ENCODE measurements at regions of chr17 and their contacts with region 1.

Region 1: DNA sequence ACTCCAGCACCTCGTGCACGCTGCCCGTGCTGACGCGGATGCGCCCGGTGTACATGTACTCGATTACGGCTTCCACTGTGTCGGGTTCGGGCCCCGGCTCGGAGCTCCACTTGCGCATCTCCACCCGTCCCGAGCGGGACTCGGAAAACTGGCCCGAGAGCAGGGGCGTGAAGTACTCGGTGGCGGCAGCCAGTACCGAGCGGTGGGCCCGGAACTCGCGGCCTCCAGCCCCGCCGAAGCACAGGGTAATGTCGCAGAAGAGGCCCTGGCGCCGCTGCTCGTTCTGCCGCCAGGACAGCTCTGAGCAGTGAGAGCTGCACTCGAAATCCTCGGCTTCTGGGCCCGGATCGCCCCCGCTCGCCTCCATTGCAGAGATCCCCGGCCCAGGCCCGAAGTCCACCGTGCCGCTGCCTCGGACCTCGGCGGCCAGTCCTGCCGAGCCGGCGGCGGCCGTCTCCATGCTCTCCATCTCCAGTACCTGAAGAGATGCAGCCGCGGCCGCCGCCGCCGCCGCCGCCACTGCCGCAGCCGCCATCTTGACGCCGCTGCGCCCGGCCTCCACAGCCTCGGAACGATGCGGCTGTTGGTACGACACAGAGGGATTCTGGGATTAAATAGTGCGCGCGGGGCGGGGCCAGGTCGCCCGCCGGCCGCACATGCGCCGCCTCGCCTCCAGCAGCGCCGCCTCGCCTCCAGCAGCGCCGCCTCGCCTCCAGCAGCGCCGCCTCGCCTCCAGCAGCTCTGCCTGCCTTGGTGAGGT is at the start of gene KLHL11:
- DNase-seq: peak; percentile 78 to 88 (median 86)
- ATAC-seq: peak; percentile 97
- H3K4me3 ChIP-seq: peak within 1 kb of the TSS; percentile 89
- H3K4me3 Mint-ChIP-seq: no peak within 1 kb of the TSS
- H3K27ac ChIP-seq: peak within 1 kb of the TSS; percentile 90
- H3K27ac Mint-ChIP-seq: peak within 1 kb of the TSS in 4 of 9 donors; percentile 73 to 92 (median 90)
- H3K4me1 ChIP-seq: peaks cover 25 to 31% of the 10 kb centered on the region in 2 donors
- H3K4me1 Mint-ChIP-seq: peaks cover 15 to 43% (median 32%) of the 10 kb centered on the region in 7 donors
- H3K27me3 ChIP-seq: no peaks in the 10 kb centered on the region
- H3K27me3 Mint-ChIP-seq: no peaks in the 10 kb centered on the region
- total RNA-seq, gene KLHL11: 15.2 to 25.9 (median 18.9) TPM

Region 2: DNA sequence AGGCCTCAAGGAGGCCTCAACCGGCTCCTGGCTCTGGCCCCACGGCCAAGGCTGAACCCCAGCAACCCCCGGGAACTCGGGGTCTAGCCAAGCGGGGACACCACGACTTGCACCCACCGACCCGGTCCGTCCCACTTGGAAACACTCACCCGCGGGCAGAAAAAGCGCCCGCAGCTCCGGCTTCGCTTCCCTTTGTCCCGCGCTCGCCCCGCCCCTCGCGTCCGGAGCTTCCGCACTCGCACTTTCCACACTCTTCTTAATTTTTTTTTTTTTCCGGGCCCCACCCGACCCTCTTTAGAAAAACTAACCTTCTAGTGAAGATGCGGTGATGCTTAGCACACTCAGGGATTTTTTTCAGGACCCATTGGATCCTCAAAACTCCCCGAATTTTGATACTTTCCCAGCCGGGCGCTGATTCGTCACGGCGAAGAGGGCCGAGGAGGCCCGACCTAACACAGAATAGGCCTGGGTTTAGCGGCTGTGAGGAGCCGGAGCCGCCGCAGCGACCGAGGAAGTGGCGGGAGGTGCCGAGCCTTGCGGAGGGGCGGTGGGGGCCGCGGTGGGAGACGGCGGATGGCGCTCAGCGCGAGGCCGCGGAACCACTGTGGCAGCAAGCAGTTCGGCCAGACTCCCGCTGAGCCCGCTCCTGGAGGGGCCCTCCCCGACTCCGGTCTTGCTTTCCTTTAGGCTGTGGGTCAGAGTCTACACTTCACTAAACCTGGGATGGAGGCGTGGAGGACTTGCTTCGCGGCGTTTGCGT is 1217.2 kb before region 1 on chr17 and contains the start of gene SMARCE1:
- CTCF ChIA-PET with region 1: no interaction called
- POLR2A ChIA-PET with region 1: no interaction called
- intact Hi-C with region 1: loop called in 1 of 2 experiments (anchors 5 kb)
- DNase-seq: peak; percentile 63 to 81 (median 76)
- ATAC-seq: peak; percentile 87
- H3K4me3 ChIP-seq: peak within 1 kb of the TSS; percentile 89
- H3K4me3 Mint-ChIP-seq: peak within 1 kb of the TSS; percentile 86 to 99 (median 90)
- H3K27ac ChIP-seq: peak within 1 kb of the TSS; percentile 95
- H3K27ac Mint-ChIP-seq: peak within 1 kb of the TSS; percentile 86 to 100 (median 98)
- H3K4me1 ChIP-seq: peaks cover 11 to 33% of the 10 kb centered on the region in 2 donors
- H3K4me1 Mint-ChIP-seq: peaks cover 27 to 64% (median 46%) of the 10 kb centered on the region in 7 donors
- H3K27me3 ChIP-seq: no peaks in the 10 kb centered on the region
- H3K27me3 Mint-ChIP-seq: no peaks in the 10 kb centered on the region
- total RNA-seq, gene SMARCE1: 65.4 to 101 (median 79.2) TPM

Region 3: GRCh38 chr17:41474863-41475262 is 390.2 kb before region 1 on chr17:
- CTCF ChIA-PET with region 1: no interaction called
- POLR2A ChIA-PET with region 1: no interaction called
- intact Hi-C with region 1: no loop called
- DNase-seq: no peak
- ATAC-seq: no peak
- H3K4me3 ChIP-seq: no peak overlapping the region
- H3K4me3 Mint-ChIP-seq: no peak overlapping the region
- H3K27ac ChIP-seq: no peak overlapping the region
- H3K27ac Mint-ChIP-seq: no peak overlapping the region
- H3K4me1 ChIP-seq: no peaks in the 10 kb centered on the region
- H3K4me1 Mint-ChIP-seq: no peaks in the 10 kb centered on the region
- H3K27me3 ChIP-seq: no peaks in the 10 kb centered on the region
- H3K27me3 Mint-ChIP-seq: peaks cover 0 to 6% (median 0%) of the 10 kb centered on the region in 5 donors

Region 4: DNA sequence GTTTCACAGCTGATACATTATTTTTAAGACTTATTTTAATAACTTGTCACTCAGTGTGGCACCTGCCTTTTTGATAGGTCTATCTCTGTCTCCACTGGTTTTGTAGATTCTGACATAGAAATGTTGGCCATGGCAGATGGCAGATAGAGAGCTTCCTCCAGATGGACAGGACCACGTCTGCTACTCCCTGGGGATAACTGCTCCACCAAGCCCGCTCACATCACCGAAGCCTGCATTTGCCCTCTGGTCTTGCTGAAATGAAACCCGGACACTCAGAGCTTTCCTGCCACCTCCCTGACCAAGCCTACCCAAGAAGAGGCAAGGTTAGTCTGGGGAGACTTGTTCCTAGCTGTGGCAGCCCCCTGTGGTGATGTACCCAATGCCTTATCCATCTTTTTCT is 114.2 kb before region 1 on chr17:
- CTCF ChIA-PET with region 1: no interaction called
- POLR2A ChIA-PET with region 1: no interaction called
- intact Hi-C with region 1: no loop called
- DNase-seq: no peak
- ATAC-seq: no peak
- H3K4me3 ChIP-seq: no peak overlapping the region
- H3K4me3 Mint-ChIP-seq: no peak overlapping the region
- H3K27ac ChIP-seq: no peak overlapping the region
- H3K27ac Mint-ChIP-seq: peak overlapping the region in 1 of 9 donors; percentile 65
- H3K4me1 ChIP-seq: no peaks in the 10 kb centered on the region
- H3K4me1 Mint-ChIP-seq: no peaks in the 10 kb centered on the region
- H3K27me3 ChIP-seq: no peaks in the 10 kb centered on the region
- H3K27me3 Mint-ChIP-seq: peaks cover 0 to 8% (median 0%) of the 10 kb centered on the region in 5 donors

Region 5: DNA sequence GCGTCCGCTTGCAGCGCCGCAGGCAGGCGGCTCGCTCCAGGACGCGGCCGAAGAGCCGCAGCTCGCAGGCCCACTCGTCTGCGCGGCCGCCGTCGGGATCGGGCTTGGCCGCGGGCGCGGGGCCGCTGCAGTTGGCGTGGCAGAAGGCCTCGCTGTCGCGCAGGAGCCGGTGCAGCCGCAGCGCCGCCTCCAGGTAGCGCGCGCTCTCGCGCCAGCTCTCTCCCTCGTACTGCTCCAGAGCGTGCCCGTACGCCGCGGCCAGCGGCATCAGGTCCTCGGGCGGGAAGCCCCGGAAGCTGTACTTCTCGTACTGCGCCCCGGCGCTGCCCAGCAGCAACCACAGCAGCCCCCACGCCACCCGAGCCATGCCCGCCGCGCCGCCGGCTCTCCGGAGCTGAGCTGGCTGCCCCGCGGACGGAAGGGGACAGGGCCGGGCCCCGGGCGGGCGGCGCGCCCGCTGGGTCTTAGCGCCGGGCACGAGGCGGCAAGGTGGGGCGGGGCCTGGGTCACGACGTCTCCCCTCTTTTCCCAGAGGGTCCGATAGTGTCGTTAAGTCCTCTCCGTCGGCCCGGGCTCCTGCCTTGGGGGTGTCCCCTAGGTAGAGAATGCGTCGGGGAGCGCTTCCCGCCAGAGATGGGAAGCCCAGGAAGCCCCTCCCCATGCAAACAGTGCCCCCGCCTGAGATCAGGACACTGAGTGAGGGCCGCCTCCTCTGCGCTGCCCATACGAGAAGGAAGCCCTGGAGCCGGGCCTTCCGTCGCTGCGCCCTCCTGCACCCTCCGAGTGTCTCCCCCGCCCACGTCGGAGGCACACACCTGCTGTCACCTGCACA is 53.3 kb before region 1 on chr17 and contains the start of gene P3H4:
- CTCF ChIA-PET with region 1: interaction called, 3 read pairs
- POLR2A ChIA-PET with region 1: interaction called, 8 read pairs
- intact Hi-C with region 1: loop called in 1 of 2 experiments (anchors 1 kb)
- DNase-seq: peak; percentile 68 to 83 (median 79)
- ATAC-seq: peak; percentile 94
- H3K4me3 ChIP-seq: peak within 1 kb of the TSS; percentile 81
- H3K4me3 Mint-ChIP-seq: peak within 1 kb of the TSS; percentile 89 to 99 (median 94)
- H3K27ac ChIP-seq: peak within 1 kb of the TSS; percentile 48
- H3K27ac Mint-ChIP-seq: peak within 1 kb of the TSS in 7 of 9 donors; percentile 50 to 81 (median 68)
- H3K4me1 ChIP-seq: peaks cover 10 to 16% of the 10 kb centered on the region in 2 donors
- H3K4me1 Mint-ChIP-seq: peaks cover 14 to 26% (median 21%) of the 10 kb centered on the region in 7 donors
- H3K27me3 ChIP-seq: no peaks in the 10 kb centered on the region
- H3K27me3 Mint-ChIP-seq: peaks cover 0 to 22% (median 0%) of the 10 kb centered on the region in 5 donors
- total RNA-seq, gene P3H4: 3.6 to 7.0 (median 5.3) TPM

Region 6: GRCh38 chr17:41918314-41919164 is 53.5 kb after region 1 on chr17 and contains the start of gene ACLY:
- CTCF ChIA-PET with region 1: no interaction called
- POLR2A ChIA-PET with region 1: interaction called, 13 read pairs
- intact Hi-C with region 1: loop called (anchors 1 kb)
- DNase-seq: peak; percentile 88 to 99 (median 92)
- ATAC-seq: peak; percentile 100
- H3K4me3 ChIP-seq: peak within 1 kb of the TSS; percentile 94
- H3K4me3 Mint-ChIP-seq: peak within 1 kb of the TSS; percentile 84 to 99 (median 89)
- H3K27ac ChIP-seq: peak within 1 kb of the TSS; percentile 79
- H3K27ac Mint-ChIP-seq: peak within 1 kb of the TSS; percentile 48 to 97 (median 78)
- H3K4me1 ChIP-seq: peaks cover 8 to 14% of the 10 kb centered on the region in 2 donors
- H3K4me1 Mint-ChIP-seq: peaks cover 29 to 48% (median 35%) of the 10 kb centered on the region in 7 donors
- H3K27me3 ChIP-seq: no peaks in the 10 kb centered on the region
- H3K27me3 Mint-ChIP-seq: no peaks in the 10 kb centered on the region
- total RNA-seq, gene ACLY: 59.2 to 154 (median 70.8) TPM

Region 7: GRCh38 chr17:41976142-41976768 is 111.2 kb after region 1 on chr17:
- CTCF ChIA-PET with region 1: no interaction called
- POLR2A ChIA-PET with region 1: no interaction called
- intact Hi-C with region 1: no loop called
- DNase-seq: no peak
- ATAC-seq: no peak
- H3K4me3 ChIP-seq: no peak overlapping the region
- H3K4me3 Mint-ChIP-seq: no peak overlapping the region
- H3K27ac ChIP-seq: no peak overlapping the region
- H3K27ac Mint-ChIP-seq: peak overlapping the region in 3 of 9 donors; percentile 28 to 59 (median 29)
- H3K4me1 ChIP-seq: no peaks in the 10 kb centered on the region
- H3K4me1 Mint-ChIP-seq: peaks cover 0 to 15% (median 5%) of the 10 kb centered on the region in 7 donors
- H3K27me3 ChIP-seq: no peaks in the 10 kb centered on the region
- H3K27me3 Mint-ChIP-seq: no peaks in the 10 kb centered on the region

Region 8: GRCh38 chr17:42019509-42020404 is 154.7 kb after region 1 on chr17 and contains the start of gene NKIRAS2:
- CTCF ChIA-PET with region 1: no interaction called
- POLR2A ChIA-PET with region 1: interaction called, 4 read pairs
- intact Hi-C with region 1: loop called in 1 of 2 experiments (anchors 5 kb)
- DNase-seq: peak; percentile 83 to 97 (median 89)
- ATAC-seq: peak; percentile 88
- H3K4me3 ChIP-seq: peak within 1 kb of the TSS; percentile 85
- H3K4me3 Mint-ChIP-seq: peak within 1 kb of the TSS; percentile 91 to 100 (median 99)
- H3K27ac ChIP-seq: peak within 1 kb of the TSS; percentile 84
- H3K27ac Mint-ChIP-seq: peak within 1 kb of the TSS; percentile 77 to 99 (median 90)
- H3K4me1 ChIP-seq: peaks cover 32 to 37% of the 10 kb centered on the region in 2 donors
- H3K4me1 Mint-ChIP-seq: peaks cover 44 to 69% (median 56%) of the 10 kb centered on the region in 7 donors
- H3K27me3 ChIP-seq: no peaks in the 10 kb centered on the region
- H3K27me3 Mint-ChIP-seq: no peaks in the 10 kb centered on the region
- total RNA-seq, gene NKIRAS2: 14.3 to 24.0 (median 20.4) TPM

Region 9: DNA sequence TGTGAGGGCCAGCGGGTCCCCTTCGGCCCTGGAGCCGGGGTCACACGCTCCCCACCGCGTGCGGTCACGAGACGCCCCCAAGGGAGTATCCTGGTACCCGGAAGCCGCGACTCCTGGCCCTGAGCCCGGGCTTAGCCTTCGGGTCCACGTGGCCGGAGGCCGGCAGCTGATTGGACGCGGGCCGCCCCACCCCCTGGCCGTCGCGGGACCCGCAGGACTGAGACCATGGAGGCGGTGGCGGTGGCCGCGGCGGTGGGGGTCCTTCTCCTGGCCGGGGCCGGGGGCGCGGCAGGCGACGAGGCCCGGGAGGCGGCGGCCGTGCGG is 671.0 kb after region 1 on chr17 and contains the start of gene NAGLU:
- CTCF ChIA-PET with region 1: no interaction called
- POLR2A ChIA-PET with region 1: no interaction called
- intact Hi-C with region 1: loop called in 1 of 2 experiments (anchors 10 kb)
- DNase-seq: peak; percentile 56 to 93 (median 69)
- ATAC-seq: peak; percentile 91
- H3K4me3 ChIP-seq: peak within 1 kb of the TSS; percentile 71
- H3K4me3 Mint-ChIP-seq: peak within 1 kb of the TSS; percentile 75 to 96 (median 86)
- H3K27ac ChIP-seq: peak within 1 kb of the TSS; percentile 57
- H3K27ac Mint-ChIP-seq: peak within 1 kb of the TSS; percentile 36 to 92 (median 79)
- H3K4me1 ChIP-seq: peaks cover 14 to 24% of the 10 kb centered on the region in 2 donors
- H3K4me1 Mint-ChIP-seq: peaks cover 29 to 50% (median 42%) of the 10 kb centered on the region in 7 donors
- H3K27me3 ChIP-seq: no peaks in the 10 kb centered on the region
- H3K27me3 Mint-ChIP-seq: peaks cover 0 to 9% (median 0%) of the 10 kb centered on the region in 5 donors
- total RNA-seq, gene NAGLU: 18.0 to 27.1 (median 22.3) TPM